ENCODE measurements at regions of chr9 and their contacts with region 1.

Region 1: GRCh38 chr9:99140685-99141314 is 35.9 kb downstream of the TGFBR1 start:
- DNase-seq: peak; percentile 67
- ATAC-seq: peak; percentile 90
- H3K4me3 ChIP-seq: no peak overlapping the region
- H3K27ac ChIP-seq: no peak overlapping the region
- H3K4me1 ChIP-seq: no peaks in the 10 kb centered on the region
- H3K27me3 ChIP-seq: no peaks in the 10 kb centered on the region
- CTCF ChIP-seq: peak; percentile 86
- POLR2A ChIP-seq: no peak
- RAD21 ChIP-seq: peak; percentile 95

Region 2: GRCh38 chr9:98848450-98849149 is 292.2 kb before region 1 on chr9:
- CTCF ChIA-PET with region 1: interaction called, 4 read pairs
- POLR2A ChIA-PET with region 1: no interaction called
- dilution Hi-C with region 1: loop called (anchors 25 kb)
- in situ Hi-C with region 1: no loop called
- intact Hi-C with region 1: loop called (anchors 1 kb)
- DNase-seq: peak; percentile 98
- ATAC-seq: peak; percentile 99
- H3K4me3 ChIP-seq: peak overlapping the region; percentile 2; the same call in 1 of the 2 replicates
- H3K27ac ChIP-seq: peak overlapping the region; percentile 15; the same call in 1 of the 2 replicates
- H3K4me1 ChIP-seq: peaks cover 9% of the 10 kb centered on the region
- H3K27me3 ChIP-seq: peaks cover 6% of the 10 kb centered on the region; the same call in 1 of the 2 replicates
- CTCF ChIP-seq: peak; percentile 93
- POLR2A ChIP-seq: no peak
- RAD21 ChIP-seq: peak; percentile 94

Region 3: DNA sequence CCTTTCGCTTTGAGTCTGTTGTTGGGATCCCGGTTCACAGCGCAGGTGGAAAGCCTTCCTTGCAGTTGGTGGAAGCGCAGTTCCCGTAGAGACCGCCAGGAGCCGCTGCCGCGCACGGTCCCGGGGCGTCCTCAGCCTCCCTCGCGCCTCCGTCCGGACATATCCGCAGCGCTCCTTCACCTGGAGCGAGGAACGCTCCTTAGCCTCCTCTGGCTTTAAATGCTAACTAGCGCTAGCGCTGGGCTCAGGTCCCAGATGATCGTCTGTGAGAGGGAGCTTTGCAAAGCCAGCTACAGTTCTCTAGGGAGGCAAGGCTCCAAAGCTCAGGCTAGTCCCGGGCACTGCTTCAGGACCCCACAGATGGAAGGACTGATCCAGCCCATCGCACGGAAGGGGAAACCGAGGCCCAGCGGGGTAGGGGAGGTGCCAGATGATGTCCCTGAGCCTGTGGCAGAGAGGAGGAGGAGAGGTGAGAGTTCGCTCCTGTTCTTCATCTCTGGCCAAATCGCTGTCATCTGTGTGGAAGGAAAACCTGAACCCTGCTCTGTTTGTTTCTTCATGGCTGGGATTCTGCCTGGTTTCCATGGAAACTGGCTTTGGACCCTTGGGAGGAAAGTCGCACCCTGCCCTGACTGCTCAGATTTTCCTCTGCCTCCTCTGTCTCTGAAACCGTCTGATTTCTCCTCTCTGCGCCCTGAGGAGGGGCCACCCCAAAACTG is 165.6 kb before region 1 on chr9:
- CTCF ChIA-PET with region 1: interaction called, 5 read pairs
- POLR2A ChIA-PET with region 1: no interaction called
- dilution Hi-C with region 1: no loop called
- in situ Hi-C with region 1: no loop called
- intact Hi-C with region 1: loop called (anchors 1 kb)
- DNase-seq: peak; percentile 66
- ATAC-seq: peak; percentile 86
- H3K4me3 ChIP-seq: no peak overlapping the region
- H3K27ac ChIP-seq: no peak overlapping the region
- H3K4me1 ChIP-seq: peaks cover 26% of the 10 kb centered on the region
- H3K27me3 ChIP-seq: no peaks in the 10 kb centered on the region
- CTCF ChIP-seq: peak; percentile 98
- POLR2A ChIP-seq: 0 out of 2 replicates have a peak, but pooled peaks have one; percentile 45
- RAD21 ChIP-seq: peak; percentile 93

Region 4: GRCh38 chr9:99092643-99093491 is 47.9 kb before region 1 on chr9:
- CTCF ChIA-PET with region 1: no interaction called
- POLR2A ChIA-PET with region 1: no interaction called
- dilution Hi-C with region 1: no loop called
- in situ Hi-C with region 1: no loop called
- intact Hi-C with region 1: no loop called
- DNase-seq: no peak
- ATAC-seq: no peak
- H3K4me3 ChIP-seq: no peak overlapping the region
- H3K27ac ChIP-seq: no peak overlapping the region
- H3K4me1 ChIP-seq: no peaks in the 10 kb centered on the region
- H3K27me3 ChIP-seq: 0 out of 2 replicates have a peak, but pooled peaks cover 2% of the 10 kb centered on the region
- CTCF ChIP-seq: no peak
- POLR2A ChIP-seq: no peak
- RAD21 ChIP-seq: no peak

Region 5: DNA sequence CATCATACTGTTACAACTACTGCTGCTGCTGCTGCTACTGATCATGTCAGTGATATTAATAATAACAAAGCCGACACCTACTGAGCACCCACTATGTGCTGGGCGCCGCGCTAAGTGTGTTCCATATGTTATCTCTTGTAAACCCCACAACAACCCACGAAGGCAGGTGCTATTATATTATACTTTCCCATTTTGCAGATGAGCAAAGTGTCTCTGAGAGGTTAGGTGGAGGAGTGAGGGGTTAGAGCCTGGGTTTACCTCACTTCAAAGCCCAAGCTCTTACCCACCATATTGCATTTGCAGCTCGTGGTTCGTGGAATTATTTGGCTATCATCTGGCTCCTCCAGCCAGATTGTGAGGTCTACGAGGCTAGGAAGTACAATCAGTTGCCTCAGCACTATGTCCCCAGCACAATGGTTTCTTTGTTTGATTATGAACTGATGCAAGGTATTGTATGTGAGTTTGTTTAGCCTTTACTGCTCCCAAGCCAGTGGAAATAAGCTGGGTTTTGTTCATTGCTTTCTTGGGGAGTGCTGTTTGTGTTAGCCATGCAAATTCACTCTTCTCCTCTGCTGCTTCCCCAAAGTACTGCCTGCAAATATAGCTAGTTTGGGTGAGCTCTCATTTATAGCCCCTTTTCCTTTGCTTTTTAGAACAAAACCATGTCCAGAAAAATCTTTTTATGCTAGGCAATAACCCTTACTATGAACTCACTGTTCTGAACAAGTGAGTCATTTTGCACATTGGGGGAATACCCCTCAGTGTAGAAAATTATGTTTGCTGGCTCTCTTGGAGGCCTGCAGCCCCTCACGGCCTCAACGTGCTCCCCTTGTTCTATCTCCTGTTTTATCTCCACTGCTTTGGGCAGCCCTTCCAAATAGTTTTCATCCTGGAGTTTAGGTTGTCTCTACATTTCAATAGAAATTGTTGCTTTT is 33.0 kb after region 1 on chr9:
- CTCF ChIA-PET with region 1: no interaction called
- POLR2A ChIA-PET with region 1: no interaction called
- dilution Hi-C with region 1: no loop called
- in situ Hi-C with region 1: no loop called
- intact Hi-C with region 1: no loop called
- DNase-seq: no peak
- ATAC-seq: no peak
- H3K4me3 ChIP-seq: no peak overlapping the region
- H3K27ac ChIP-seq: no peak overlapping the region
- H3K4me1 ChIP-seq: peaks cover 12% of the 10 kb centered on the region
- H3K27me3 ChIP-seq: peaks cover 13% of the 10 kb centered on the region
- CTCF ChIP-seq: no peak
- POLR2A ChIP-seq: no peak
- RAD21 ChIP-seq: no peak

Region 6: GRCh38 chr9:99650187-99650874 is 509.5 kb after region 1 on chr9:
- CTCF ChIA-PET with region 1: no interaction called
- POLR2A ChIA-PET with region 1: no interaction called
- dilution Hi-C with region 1: no loop called
- in situ Hi-C with region 1: no loop called
- intact Hi-C with region 1: no loop called
- DNase-seq: no peak
- ATAC-seq: no peak
- H3K4me3 ChIP-seq: no peak overlapping the region
- H3K27ac ChIP-seq: no peak overlapping the region
- H3K4me1 ChIP-seq: no peaks in the 10 kb centered on the region
- H3K27me3 ChIP-seq: peaks cover 7% of the 10 kb centered on the region
- CTCF ChIP-seq: no peak
- POLR2A ChIP-seq: no peak
- RAD21 ChIP-seq: no peak